ENCODE measurements at regions of chr9 and their contacts with region 1.

Region 1: GRCh38 chr9:7298123-7298522 is 501.5 kb downstream of the DMAC1 start:
- DNase-seq: peak; percentile 27
- H3K4me3 Mint-ChIP-seq: no peak overlapping the region
- H3K27ac Mint-ChIP-seq: peak overlapping the region; percentile 44
- H3K4me1 Mint-ChIP-seq: peaks cover 21% of the 10 kb centered on the region
- H3K27me3 Mint-ChIP-seq: peaks cover 28% of the 10 kb centered on the region

Region 2: DNA sequence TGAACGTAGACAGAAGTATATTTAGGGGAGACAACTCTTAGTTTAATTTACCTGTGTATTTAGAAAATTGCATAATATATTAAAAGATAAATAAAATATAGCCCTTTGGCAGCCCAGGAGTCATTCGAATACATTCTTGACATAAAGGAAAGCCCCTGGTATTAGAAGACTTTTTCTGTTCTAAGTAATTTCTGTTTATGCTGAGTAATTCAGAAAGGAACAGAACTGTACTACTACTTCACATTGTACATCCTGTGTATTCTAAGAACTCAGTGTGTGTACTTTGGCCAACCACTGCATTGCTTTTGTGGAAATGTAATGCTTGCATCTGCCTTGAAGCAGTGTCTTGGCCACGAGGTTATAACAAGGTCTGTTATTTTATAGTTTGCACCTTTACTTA is 404.0 kb before region 1 on chr9:
- intact Hi-C with region 1: loop called (anchors 5 kb)
- DNase-seq: no peak
- H3K4me3 Mint-ChIP-seq: peak overlapping the region; percentile 19
- H3K27ac Mint-ChIP-seq: peak overlapping the region; percentile 74
- H3K4me1 Mint-ChIP-seq: peaks cover 51% of the 10 kb centered on the region
- H3K27me3 Mint-ChIP-seq: no peaks in the 10 kb centered on the region

Region 3: GRCh38 chr9:6955251-6955921 is 342.7 kb before region 1 on chr9:
- intact Hi-C with region 1: no loop called
- DNase-seq: no peak
- H3K4me3 Mint-ChIP-seq: no peak overlapping the region
- H3K27ac Mint-ChIP-seq: no peak overlapping the region
- H3K4me1 Mint-ChIP-seq: peaks cover 1% of the 10 kb centered on the region
- H3K27me3 Mint-ChIP-seq: no peaks in the 10 kb centered on the region

Region 4: GRCh38 chr9:7186175-7186574 is 111.9 kb before region 1 on chr9:
- intact Hi-C with region 1: no loop called
- DNase-seq: no peak
- H3K4me3 Mint-ChIP-seq: no peak overlapping the region
- H3K27ac Mint-ChIP-seq: no peak overlapping the region
- H3K4me1 Mint-ChIP-seq: no peaks in the 10 kb centered on the region
- H3K27me3 Mint-ChIP-seq: no peaks in the 10 kb centered on the region

Region 5: GRCh38 chr9:7216004-7216831 is 81.9 kb before region 1 on chr9:
- intact Hi-C with region 1: loop called (anchors 5 kb)
- DNase-seq: peak; percentile 47
- H3K4me3 Mint-ChIP-seq: no peak overlapping the region
- H3K27ac Mint-ChIP-seq: peak overlapping the region; percentile 53
- H3K4me1 Mint-ChIP-seq: peaks cover 29% of the 10 kb centered on the region
- H3K27me3 Mint-ChIP-seq: peaks cover 20% of the 10 kb centered on the region

Region 6: DNA sequence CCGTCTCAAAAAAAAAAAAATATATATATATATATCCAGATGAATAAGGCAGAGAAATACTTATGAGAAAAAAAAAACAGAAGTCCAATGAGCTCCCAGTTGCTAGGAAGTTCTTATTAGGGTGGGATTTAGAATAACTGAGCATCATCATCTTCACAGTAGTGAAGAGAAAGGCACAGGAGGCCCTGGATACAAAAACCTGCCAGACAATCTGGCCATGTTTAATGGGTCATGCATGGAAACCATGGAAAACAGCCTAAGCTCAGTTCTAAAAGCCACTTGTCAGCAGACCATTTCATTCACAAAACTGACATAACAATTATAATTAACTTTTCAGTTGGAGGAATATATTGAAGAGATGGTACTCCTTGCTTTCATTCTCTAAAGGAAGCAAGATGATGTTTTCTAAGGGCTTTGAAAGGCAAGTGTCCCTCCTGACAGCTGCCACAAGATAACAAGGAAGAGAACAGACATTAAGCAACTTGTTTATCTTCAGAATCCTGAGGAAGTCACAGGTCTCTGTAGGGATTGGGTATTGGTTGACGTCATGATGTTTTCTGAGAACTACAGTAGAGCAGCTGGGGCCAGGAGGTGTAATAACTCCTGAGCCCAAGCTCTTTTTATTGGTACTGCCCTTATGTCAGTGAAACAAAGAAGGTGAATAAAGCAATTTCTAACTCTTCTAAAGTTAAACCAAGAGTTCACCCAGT is 38.4 kb after region 1 on chr9:
- intact Hi-C with region 1: no loop called
- DNase-seq: no peak
- H3K4me3 Mint-ChIP-seq: no peak overlapping the region
- H3K27ac Mint-ChIP-seq: no peak overlapping the region
- H3K4me1 Mint-ChIP-seq: no peaks in the 10 kb centered on the region
- H3K27me3 Mint-ChIP-seq: peaks cover 14% of the 10 kb centered on the region

Region 7: GRCh38 chr9:7415836-7416235 is 117.7 kb after region 1 on chr9:
- intact Hi-C with region 1: no loop called
- DNase-seq: no peak
- H3K4me3 Mint-ChIP-seq: no peak overlapping the region
- H3K27ac Mint-ChIP-seq: no peak overlapping the region
- H3K4me1 Mint-ChIP-seq: no peaks in the 10 kb centered on the region
- H3K27me3 Mint-ChIP-seq: peaks cover 22% of the 10 kb centered on the region

Region 8: DNA sequence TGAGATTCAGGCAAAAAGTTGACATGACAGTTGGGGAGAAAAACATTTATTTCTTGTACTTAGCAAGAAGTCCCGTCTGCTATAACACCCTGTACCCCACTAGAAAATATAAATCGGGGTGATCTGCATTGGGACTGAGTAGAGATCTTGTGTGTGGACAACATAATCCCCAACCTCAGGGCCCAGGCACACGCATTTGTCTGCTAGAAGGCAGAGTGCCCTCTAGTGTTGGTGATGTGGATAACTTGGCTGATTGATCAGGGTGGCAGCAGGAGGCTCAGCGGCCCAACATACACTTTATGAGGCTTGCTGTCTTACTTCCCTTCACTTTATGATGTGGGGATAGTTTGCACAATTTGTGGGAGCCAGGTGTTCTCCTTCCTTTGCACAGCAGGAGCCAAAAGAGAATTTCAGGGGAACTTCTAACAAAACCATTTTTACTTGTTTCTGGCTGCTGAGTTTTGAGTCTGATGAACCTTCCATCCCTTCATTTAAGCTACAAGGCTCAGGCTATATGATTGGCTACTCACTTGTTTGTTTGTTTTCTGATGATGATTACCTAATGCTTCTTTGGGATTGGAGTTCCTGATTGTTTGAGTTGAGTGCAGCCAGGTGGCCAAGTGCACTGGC is 238.3 kb after region 1 on chr9:
- intact Hi-C with region 1: loop called (anchors 1 kb)
- DNase-seq: peak; percentile 29
- H3K4me3 Mint-ChIP-seq: no peak overlapping the region
- H3K27ac Mint-ChIP-seq: no peak overlapping the region
- H3K4me1 Mint-ChIP-seq: peaks cover 37% of the 10 kb centered on the region
- H3K27me3 Mint-ChIP-seq: peaks cover 10% of the 10 kb centered on the region

Region 9: GRCh38 chr9:8115570-8115969 is 817.4 kb after region 1 on chr9:
- intact Hi-C with region 1: loop called (anchors 2 kb)
- DNase-seq: peak; percentile 8
- H3K4me3 Mint-ChIP-seq: peak overlapping the region; percentile 35
- H3K27ac Mint-ChIP-seq: peak overlapping the region; percentile 88
- H3K4me1 Mint-ChIP-seq: peaks cover 27% of the 10 kb centered on the region
- H3K27me3 Mint-ChIP-seq: no peaks in the 10 kb centered on the region